ENCODE measurements at regions of chr3 and their contacts with region 1.

Region 1: GRCh38 chr3:46629551-46630517 is 17.5 kb downstream of the FAM240A start:
- DNase-seq: peak; percentile 66 to 77 (median 73)
- H3K4me3 ChIP-seq: peak overlapping the region in 1 of 2 donors; percentile 46
- H3K4me3 Mint-ChIP-seq: peak overlapping the region; percentile 51 to 80 (median 72)
- H3K27ac ChIP-seq: no peak overlapping the region
- H3K27ac Mint-ChIP-seq: peak overlapping the region in 6 of 7 donors; percentile 29 to 95 (median 72)
- H3K4me1 ChIP-seq: peaks cover 9% of the 10 kb centered on the region
- H3K4me1 Mint-ChIP-seq: peaks cover 7 to 25% (median 16%) of the 10 kb centered on the region in 4 donors
- H3K27me3 ChIP-seq: no peaks in the 10 kb centered on the region
- H3K27me3 Mint-ChIP-seq: peaks cover 2 to 3% of the 10 kb centered on the region in 2 donors

Region 2: GRCh38 chr3:46558184-46559043 is 71.4 kb before region 1 on chr3:
- CTCF ChIA-PET with region 1: interaction called, 11 read pairs
- POLR2A ChIA-PET with region 1: interaction called, 6 read pairs
- intact Hi-C with region 1: loop called (anchors 1 kb)
- DNase-seq: peak; percentile 68 to 74 (median 73)
- H3K4me3 ChIP-seq: peak overlapping the region in 1 of 2 donors; percentile 25
- H3K4me3 Mint-ChIP-seq: peak overlapping the region; percentile 76 to 87 (median 82)
- H3K27ac ChIP-seq: no peak overlapping the region
- H3K27ac Mint-ChIP-seq: peak overlapping the region in 6 of 7 donors; percentile 13 to 71 (median 36)
- H3K4me1 ChIP-seq: peaks cover 14% of the 10 kb centered on the region
- H3K4me1 Mint-ChIP-seq: peaks cover 10 to 17% (median 15%) of the 10 kb centered on the region in 4 donors
- H3K27me3 ChIP-seq: no peaks in the 10 kb centered on the region
- H3K27me3 Mint-ChIP-seq: peaks cover 1 to 4% of the 10 kb centered on the region in 2 donors

Region 3: DNA sequence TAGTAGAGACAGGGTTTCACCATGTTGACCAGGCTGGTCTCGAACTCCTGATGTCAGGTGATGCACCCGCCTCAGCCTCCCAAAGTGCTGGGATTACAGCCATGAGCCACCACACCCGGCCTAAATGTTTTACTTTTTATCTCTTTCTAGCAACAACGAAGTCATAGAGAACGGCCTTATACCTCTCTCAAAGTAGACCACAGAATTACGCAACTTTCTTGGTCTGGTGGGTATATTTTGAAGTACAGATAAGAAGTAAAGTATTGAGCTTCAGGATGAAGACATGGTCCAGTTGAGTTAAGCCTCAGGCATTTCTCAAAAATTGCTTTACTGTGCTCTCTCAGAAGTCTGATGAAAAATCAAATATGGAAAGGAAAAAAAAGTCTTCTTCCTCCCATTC is 13.1 kb after region 1 on chr3:
- CTCF ChIA-PET with region 1: interaction called, 12 read pairs
- POLR2A ChIA-PET with region 1: no interaction called
- intact Hi-C with region 1: no loop called
- DNase-seq: no peak
- H3K4me3 ChIP-seq: no peak overlapping the region
- H3K4me3 Mint-ChIP-seq: no peak overlapping the region
- H3K27ac ChIP-seq: no peak overlapping the region
- H3K27ac Mint-ChIP-seq: no peak overlapping the region
- H3K4me1 ChIP-seq: no peaks in the 10 kb centered on the region
- H3K4me1 Mint-ChIP-seq: no peaks in the 10 kb centered on the region
- H3K27me3 ChIP-seq: peaks cover 8% of the 10 kb centered on the region
- H3K27me3 Mint-ChIP-seq: peaks cover 17 to 18% of the 10 kb centered on the region in 2 donors

Measured in CD4-positive, alpha-beta memory T cell (primary cell).